ENCODE measurements at regions of chr4 and their contacts with region 1.

Region 1: DNA sequence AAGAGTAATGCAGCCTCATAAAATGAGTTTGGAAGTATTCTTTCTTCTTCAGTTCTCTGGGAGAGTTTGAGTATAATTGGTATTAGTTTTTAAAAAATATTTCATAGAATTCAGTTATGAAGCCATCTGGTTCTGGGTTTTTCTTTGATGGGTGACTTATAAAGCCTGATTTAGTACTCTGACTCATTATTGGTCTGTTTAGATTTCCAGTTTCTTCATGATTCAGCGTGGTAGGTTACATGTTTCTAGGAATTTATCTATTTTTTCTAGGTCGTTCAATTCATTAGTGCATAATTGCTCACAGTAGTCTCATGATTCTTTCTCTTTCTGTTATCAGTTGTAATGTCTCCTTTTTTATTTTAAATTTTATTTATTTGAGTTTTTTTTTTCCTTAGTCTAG is 111.2 kb downstream of the CEP44 start:
- DNase-seq: peak; percentile 67
- ATAC-seq: peak; percentile 37; the same call in 1 of the 2 replicates
- H3K4me3 ChIP-seq: peak overlapping the region; percentile 35; the same call in 1 of the 2 replicates
- H3K27ac ChIP-seq: peak overlapping the region; percentile 84
- H3K4me1 ChIP-seq: peaks cover 29% of the 10 kb centered on the region
- H3K27me3 ChIP-seq: no peaks in the 10 kb centered on the region
- CTCF ChIP-seq: no peak

Region 2: GRCh38 chr4:174490451-174490870 is 95.5 kb after region 1 on chr4:
- CTCF ChIA-PET with region 1: no interaction called
- POLR2A ChIA-PET with region 1: interaction called, 18 read pairs
- intact Hi-C with region 1: no loop called
- DNase-seq: peak; percentile 5
- ATAC-seq: no peak
- H3K4me3 ChIP-seq: no peak overlapping the region
- H3K27ac ChIP-seq: no peak overlapping the region
- H3K4me1 ChIP-seq: peaks cover 18% of the 10 kb centered on the region
- H3K27me3 ChIP-seq: no peaks in the 10 kb centered on the region
- CTCF ChIP-seq: no peak